ENCODE measurements at regions of chr19 and their contacts with region 1.

Region 1: DNA sequence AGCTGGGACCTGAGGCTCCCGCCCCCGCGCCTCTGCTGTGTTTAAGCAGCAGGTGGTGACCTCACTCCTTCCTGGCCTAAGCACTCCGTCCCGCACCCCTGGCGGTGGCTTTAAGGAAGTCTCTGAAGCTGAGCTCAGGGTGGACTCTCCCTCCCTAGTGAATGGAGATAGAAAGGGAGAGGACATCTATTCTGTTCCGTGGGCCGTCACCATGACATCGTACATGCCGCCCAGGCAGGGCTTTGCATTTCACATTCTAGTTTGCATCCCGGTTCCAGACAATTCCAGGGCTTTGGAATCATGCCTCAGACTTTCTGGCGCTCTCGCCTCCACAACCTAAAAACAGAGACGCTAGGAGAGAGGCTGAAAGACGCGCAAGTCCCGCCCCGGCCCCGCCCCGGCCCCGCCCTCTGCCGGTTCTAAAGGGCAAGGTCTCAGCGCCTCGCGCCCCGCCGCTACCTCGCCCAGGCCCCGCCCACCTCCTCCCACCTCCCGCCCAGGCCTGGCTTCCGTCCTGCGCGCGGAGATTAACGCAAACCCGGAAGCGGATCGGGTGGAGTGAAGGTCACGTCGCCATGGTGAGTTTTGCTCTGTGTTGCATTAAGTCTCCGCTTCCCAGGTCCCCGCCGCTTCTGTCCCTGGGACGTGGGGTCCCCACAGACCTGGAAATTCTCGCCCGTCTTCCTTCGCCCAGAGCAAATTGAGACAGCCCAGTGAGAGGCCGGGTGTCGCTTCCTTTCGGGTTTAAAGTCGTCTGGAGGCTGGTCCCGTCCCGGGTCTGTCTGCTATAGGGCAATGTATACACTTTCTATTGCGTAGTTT is at the start of gene ZNF808:
- DNase-seq: peak; percentile 90 to 96
- ATAC-seq: peak; percentile 93 to 96
- H3K4me3 ChIP-seq: peak within 1 kb of the TSS; percentile 73 to 94 (median 88)
- H3K27ac ChIP-seq: peak within 1 kb of the TSS; percentile 76 to 92 (median 90)
- H3K4me1 ChIP-seq: peaks cover 8 to 11% of the 10 kb centered on the region in 2 donors
- H3K27me3 ChIP-seq: no peaks in the 10 kb centered on the region
- CTCF ChIP-seq: peak; percentile 64 to 72 (median 68)
- POLR2A ChIP-seq: peak in 1 of 2 donors; percentile 44
- total RNA-seq, gene ZNF808: 3.4 to 12.9 (median 7.9) TPM

Region 2: GRCh38 chr19:52139252-52140031 is 387.9 kb before region 1 on chr19 and contains the start of gene ZNF616:
- in situ Hi-C with region 1: no loop called
- intact Hi-C with region 1: loop called (anchors 2 kb)
- DNase-seq: peak; percentile 96
- ATAC-seq: peak; percentile 97
- H3K4me3 ChIP-seq: peak within 1 kb of the TSS; percentile 71 to 94 (median 87)
- H3K27ac ChIP-seq: peak within 1 kb of the TSS; percentile 88 to 96 (median 93)
- H3K4me1 ChIP-seq: peaks cover 12 to 21% of the 10 kb centered on the region in 2 donors
- H3K27me3 ChIP-seq: no peaks in the 10 kb centered on the region
- CTCF ChIP-seq: peak; percentile 74 to 94 (median 87)
- POLR2A ChIP-seq: peak; percentile 63 to 71
- total RNA-seq, gene ZNF616: 1.1 to 5.3 (median 2.4) TPM

Region 3: GRCh38 chr19:52296773-52297600 is 230.4 kb before region 1 on chr19 and contains the start of gene ZNF480:
- in situ Hi-C with region 1: no loop called
- intact Hi-C with region 1: loop called (anchors 5 kb)
- DNase-seq: peak; percentile 58 to 70
- ATAC-seq: peak; percentile 93 to 94
- H3K4me3 ChIP-seq: peak within 1 kb of the TSS; percentile 81 to 94 (median 86)
- H3K27ac ChIP-seq: peak within 1 kb of the TSS; percentile 90 to 94 (median 92)
- H3K4me1 ChIP-seq: peaks cover 5 to 7% of the 10 kb centered on the region in 2 donors
- H3K27me3 ChIP-seq: no peaks in the 10 kb centered on the region
- CTCF ChIP-seq: peak in 1 of 5 experiments; percentile 13
- POLR2A ChIP-seq: peak; percentile 60 to 73
- total RNA-seq, gene ZNF480: 3.8 to 7.4 (median 6.0) TPM

Region 4: GRCh38 chr19:52464798-52465470 is 62.4 kb before region 1 on chr19:
- in situ Hi-C with region 1: no loop called
- intact Hi-C with region 1: no loop called
- DNase-seq: no peak
- ATAC-seq: no peak
- H3K4me3 ChIP-seq: no peak overlapping the region
- H3K27ac ChIP-seq: no peak overlapping the region
- H3K4me1 ChIP-seq: no peaks in the 10 kb centered on the region
- H3K27me3 ChIP-seq: no peaks in the 10 kb centered on the region
- CTCF ChIP-seq: no peak
- POLR2A ChIP-seq: no peak

Region 5: GRCh38 chr19:52492597-52493470 is 34.5 kb before region 1 on chr19:
- in situ Hi-C with region 1: no loop called
- intact Hi-C with region 1: no loop called
- DNase-seq: no peak
- ATAC-seq: no peak
- H3K4me3 ChIP-seq: no peak overlapping the region
- H3K27ac ChIP-seq: no peak overlapping the region
- H3K4me1 ChIP-seq: no peaks in the 10 kb centered on the region
- H3K27me3 ChIP-seq: peaks cover 0 to 4% (median 0%) of the 10 kb centered on the region in 3 donors
- CTCF ChIP-seq: no peak
- POLR2A ChIP-seq: no peak

Region 6: GRCh38 chr19:52570000-52570861 is 42.9 kb after region 1 on chr19 and contains the start of gene ZNF701:
- in situ Hi-C with region 1: loop called in 2 of 4 experiments (anchors 5 kb)
- intact Hi-C with region 1: loop called (anchors 1 kb)
- DNase-seq: peak; percentile 88 to 91
- ATAC-seq: peak; percentile 99
- H3K4me3 ChIP-seq: peak within 1 kb of the TSS; percentile 66 to 98 (median 80)
- H3K27ac ChIP-seq: peak within 1 kb of the TSS; percentile 70 to 83 (median 79)
- H3K4me1 ChIP-seq: peaks cover 6 to 8% of the 10 kb centered on the region in 2 donors
- H3K27me3 ChIP-seq: no peaks in the 10 kb centered on the region
- CTCF ChIP-seq: peak in 4 of 5 experiments; percentile 43 to 60 (median 48)
- POLR2A ChIP-seq: peak; percentile 85 to 86
- total RNA-seq, gene ZNF701: 4.0 to 6.2 (median 4.8) TPM

Measured in gastrocnemius medialis (tissue), 4 donors.